Caco-2 (cell line): ENCODE measurements at regions of chr11 and their contacts with region 1.

Region 1: GRCh38 chr11:23974051-23974450 is 522.8 kb upstream of the LUZP2 start:
- DNase-seq: no peak
- H3K4me3 ChIP-seq: no peak overlapping the region
- H3K4me3 Mint-ChIP-seq: peak overlapping the region; percentile 32
- H3K27ac Mint-ChIP-seq: peak overlapping the region; percentile 76
- H3K4me1 ChIP-seq: peaks cover 44% of the 10 kb centered on the region
- H3K4me1 Mint-ChIP-seq: peaks cover 40% of the 10 kb centered on the region
- H3K27me3 ChIP-seq: no peaks in the 10 kb centered on the region
- H3K27me3 Mint-ChIP-seq: no peaks in the 10 kb centered on the region
- CTCF ChIP-seq: no peak

Region 2: DNA sequence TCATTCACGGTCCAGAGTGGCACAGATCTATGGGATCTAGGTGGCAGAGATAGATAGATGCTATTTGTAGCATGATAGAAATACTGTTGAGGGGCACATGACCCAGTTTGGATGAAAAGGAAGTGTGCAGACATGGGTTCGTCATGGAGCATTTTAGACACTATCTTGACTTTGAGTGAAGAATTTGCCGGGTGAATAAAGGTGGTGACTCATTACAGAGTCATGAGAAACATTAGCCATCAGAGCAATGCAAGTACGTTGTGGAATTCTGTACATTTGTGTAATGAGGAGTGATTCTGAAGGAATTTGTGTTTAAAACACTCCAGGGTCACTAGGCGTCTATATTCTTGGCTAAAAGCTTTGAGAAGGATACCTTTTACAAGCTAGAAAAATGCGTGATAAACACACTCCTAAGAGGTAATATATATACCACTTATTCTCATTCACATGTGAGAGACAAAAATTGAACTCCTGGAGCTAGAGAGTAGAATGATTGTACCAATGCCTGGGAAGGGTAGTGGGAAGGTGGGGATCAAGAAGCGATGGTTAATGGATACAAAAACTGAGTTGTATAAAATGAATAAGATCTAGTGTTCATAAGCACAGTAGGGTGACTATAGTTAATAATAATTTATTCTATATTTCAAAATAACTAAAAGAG is 70.9 kb before region 1 on chr11:
- CTCF ChIA-PET with region 1: no interaction called
- POLR2A ChIA-PET with region 1: no interaction called
- intact Hi-C with region 1: loop called (anchors 1 kb)
- DNase-seq: peak; percentile 38 to 39
- H3K4me3 ChIP-seq: no peak overlapping the region
- H3K4me3 Mint-ChIP-seq: peak overlapping the region; percentile 46
- H3K27ac Mint-ChIP-seq: peak overlapping the region; percentile 73
- H3K4me1 ChIP-seq: peaks cover 20% of the 10 kb centered on the region
- H3K4me1 Mint-ChIP-seq: peaks cover 18% of the 10 kb centered on the region
- H3K27me3 ChIP-seq: no peaks in the 10 kb centered on the region
- H3K27me3 Mint-ChIP-seq: no peaks in the 10 kb centered on the region
- CTCF ChIP-seq: no peak

Region 3: GRCh38 chr11:23988381-23989006 is 14.4 kb after region 1 on chr11:
- CTCF ChIA-PET with region 1: no interaction called
- POLR2A ChIA-PET with region 1: no interaction called
- intact Hi-C with region 1: loop called (anchors 1 kb)
- DNase-seq: peak in 1 of 2 experiments; percentile 36
- H3K4me3 ChIP-seq: no peak overlapping the region
- H3K4me3 Mint-ChIP-seq: no peak overlapping the region
- H3K27ac Mint-ChIP-seq: peak overlapping the region; percentile 68
- H3K4me1 ChIP-seq: peaks cover 22% of the 10 kb centered on the region
- H3K4me1 Mint-ChIP-seq: peaks cover 29% of the 10 kb centered on the region
- H3K27me3 ChIP-seq: no peaks in the 10 kb centered on the region
- H3K27me3 Mint-ChIP-seq: no peaks in the 10 kb centered on the region
- CTCF ChIP-seq: no peak

Region 4: DNA sequence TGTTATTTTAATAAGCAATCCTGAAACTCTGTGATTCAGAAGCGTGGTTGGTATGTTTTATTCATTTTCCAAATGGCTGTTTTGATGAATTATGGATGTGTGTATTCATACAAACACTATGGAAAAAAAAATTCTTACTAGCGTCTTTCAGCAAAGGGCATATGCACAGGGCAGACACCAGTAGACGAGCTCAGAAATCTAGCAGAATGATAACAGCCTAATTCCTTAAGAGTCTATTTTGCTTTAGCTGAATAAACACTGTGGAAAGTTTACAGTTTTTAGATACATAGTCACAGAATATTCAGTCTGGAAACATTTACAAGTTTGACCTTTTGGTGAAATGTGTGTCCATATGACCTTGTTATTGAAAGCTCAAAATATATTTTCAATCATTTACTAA is 104.0 kb after region 1 on chr11:
- CTCF ChIA-PET with region 1: no interaction called
- POLR2A ChIA-PET with region 1: no interaction called
- intact Hi-C with region 1: loop called (anchors 1 kb)
- DNase-seq: no peak
- H3K4me3 ChIP-seq: no peak overlapping the region
- H3K4me3 Mint-ChIP-seq: no peak overlapping the region
- H3K27ac Mint-ChIP-seq: no peak overlapping the region
- H3K4me1 ChIP-seq: peaks cover 20% of the 10 kb centered on the region
- H3K4me1 Mint-ChIP-seq: peaks cover 12% of the 10 kb centered on the region
- H3K27me3 ChIP-seq: no peaks in the 10 kb centered on the region
- H3K27me3 Mint-ChIP-seq: no peaks in the 10 kb centered on the region
- CTCF ChIP-seq: no peak

Region 5: DNA sequence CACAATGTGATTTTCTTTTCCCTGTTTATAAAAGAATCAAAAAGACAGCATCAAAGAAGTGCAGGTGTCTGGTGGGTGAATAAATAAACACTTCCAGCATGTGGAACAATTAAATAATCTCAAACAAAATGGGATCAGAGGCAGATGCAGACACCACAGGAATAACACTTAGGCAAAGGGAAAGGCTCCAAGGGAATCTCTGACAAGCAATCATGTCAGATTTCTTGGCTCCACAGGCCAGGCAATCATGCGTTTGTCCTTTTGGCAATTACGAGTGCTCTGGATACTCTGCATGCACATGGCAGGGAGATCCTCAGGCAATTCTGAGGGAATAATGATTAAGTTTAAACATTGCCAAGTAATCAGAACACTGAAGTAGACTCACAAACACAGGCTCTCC is 119.3 kb after region 1 on chr11:
- CTCF ChIA-PET with region 1: no interaction called
- POLR2A ChIA-PET with region 1: no interaction called
- intact Hi-C with region 1: loop called (anchors 5 kb)
- DNase-seq: no peak
- H3K4me3 ChIP-seq: no peak overlapping the region
- H3K4me3 Mint-ChIP-seq: no peak overlapping the region
- H3K27ac Mint-ChIP-seq: no peak overlapping the region
- H3K4me1 ChIP-seq: no peaks in the 10 kb centered on the region
- H3K4me1 Mint-ChIP-seq: no peaks in the 10 kb centered on the region
- H3K27me3 ChIP-seq: no peaks in the 10 kb centered on the region
- H3K27me3 Mint-ChIP-seq: no peaks in the 10 kb centered on the region
- CTCF ChIP-seq: no peak